Activated CD4-positive, alpha-beta T cell treated with anti-CD3 and anti-CD28 coated beads, Interleukin-2, amount 10 ng/mL, durations not matched to agents 24 days and 14 days (primary cell): ENCODE measurements at regions of chr16 and their contacts with region 1.

Region 1: GRCh38 chr16:10385725-10386516 is at the start of gene ATF7IP2:
- DNase-seq: peak; percentile 96
- H3K4me3 Mint-ChIP-seq: peak within 1 kb of the TSS; percentile 96
- H3K27ac Mint-ChIP-seq: peak within 1 kb of the TSS; percentile 97
- H3K4me1 Mint-ChIP-seq: peaks cover 33% of the 10 kb centered on the region
- H3K27me3 Mint-ChIP-seq: no peaks in the 10 kb centered on the region
- total RNA-seq, gene ATF7IP2: 22.3 and 23.4 TPM in 2 replicates

Region 2: GRCh38 chr16:10332241-10332640 is 53.7 kb before region 1 on chr16:
- intact Hi-C with region 1: loop called (anchors 2 kb)
- DNase-seq: no peak
- H3K4me3 Mint-ChIP-seq: no peak overlapping the region
- H3K27ac Mint-ChIP-seq: no peak overlapping the region
- H3K4me1 Mint-ChIP-seq: peaks cover 45% of the 10 kb centered on the region
- H3K27me3 Mint-ChIP-seq: no peaks in the 10 kb centered on the region

Region 3: GRCh38 chr16:10501016-10501607 is 115.2 kb after region 1 on chr16:
- intact Hi-C with region 1: no loop called
- DNase-seq: peak; percentile 73
- H3K4me3 Mint-ChIP-seq: no peak overlapping the region
- H3K27ac Mint-ChIP-seq: no peak overlapping the region
- H3K4me1 Mint-ChIP-seq: peaks cover 5% of the 10 kb centered on the region
- H3K27me3 Mint-ChIP-seq: no peaks in the 10 kb centered on the region